Astrocyte of the cerebellum (primary cell): ENCODE measurements at regions of chr16 and their contacts with region 1.

Region 1: DNA sequence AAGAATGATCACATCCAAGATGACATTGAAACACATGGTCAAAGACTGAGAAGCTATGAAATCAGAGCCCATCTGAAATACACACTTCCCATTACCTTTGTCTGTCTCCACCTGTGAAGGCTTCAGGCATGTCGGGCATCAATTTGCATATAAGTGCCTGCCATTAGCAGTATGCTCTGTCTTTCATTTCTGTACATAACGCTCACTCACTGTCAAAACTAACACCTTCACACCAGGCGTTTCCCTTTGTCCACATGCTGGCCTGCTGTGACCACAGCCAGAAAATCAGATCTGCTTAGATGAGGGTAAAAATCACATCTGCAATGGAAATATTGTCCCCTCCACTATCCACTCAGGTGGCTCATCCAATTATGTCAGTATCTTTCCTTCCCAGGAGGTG is 524.8 kb downstream of the TOX3 start:
- DNase-seq: no peak
- H3K4me3 ChIP-seq: no peak overlapping the region
- CTCF ChIP-seq: no peak

Region 2: DNA sequence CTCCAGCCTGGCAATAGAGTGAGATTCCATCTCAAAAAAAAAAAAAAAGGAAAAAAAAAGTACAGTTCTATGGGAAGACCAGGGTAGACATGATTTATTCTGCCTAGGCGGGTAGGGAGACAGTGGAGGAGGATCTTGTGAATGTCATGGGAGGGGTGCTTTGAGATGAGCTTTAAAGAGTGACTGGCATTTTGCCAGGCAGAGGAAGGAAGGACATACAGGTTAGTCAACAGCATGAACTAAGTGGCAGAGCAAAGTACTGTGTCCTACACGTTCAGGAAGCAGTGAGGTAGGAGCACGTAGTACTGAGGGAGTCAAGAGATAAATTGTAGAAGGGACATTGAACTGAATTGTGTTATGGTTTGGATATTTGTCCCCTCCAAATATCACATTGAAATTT is 73.3 kb after region 1 on chr16:
- in situ Hi-C with region 1: loop called (anchors 5 kb)
- DNase-seq: no peak
- H3K4me3 ChIP-seq: no peak overlapping the region
- CTCF ChIP-seq: no peak